Breast epithelium (tissue), 4 donors: ENCODE measurements at regions of chr11 and their contacts with region 1.

Region 1: DNA sequence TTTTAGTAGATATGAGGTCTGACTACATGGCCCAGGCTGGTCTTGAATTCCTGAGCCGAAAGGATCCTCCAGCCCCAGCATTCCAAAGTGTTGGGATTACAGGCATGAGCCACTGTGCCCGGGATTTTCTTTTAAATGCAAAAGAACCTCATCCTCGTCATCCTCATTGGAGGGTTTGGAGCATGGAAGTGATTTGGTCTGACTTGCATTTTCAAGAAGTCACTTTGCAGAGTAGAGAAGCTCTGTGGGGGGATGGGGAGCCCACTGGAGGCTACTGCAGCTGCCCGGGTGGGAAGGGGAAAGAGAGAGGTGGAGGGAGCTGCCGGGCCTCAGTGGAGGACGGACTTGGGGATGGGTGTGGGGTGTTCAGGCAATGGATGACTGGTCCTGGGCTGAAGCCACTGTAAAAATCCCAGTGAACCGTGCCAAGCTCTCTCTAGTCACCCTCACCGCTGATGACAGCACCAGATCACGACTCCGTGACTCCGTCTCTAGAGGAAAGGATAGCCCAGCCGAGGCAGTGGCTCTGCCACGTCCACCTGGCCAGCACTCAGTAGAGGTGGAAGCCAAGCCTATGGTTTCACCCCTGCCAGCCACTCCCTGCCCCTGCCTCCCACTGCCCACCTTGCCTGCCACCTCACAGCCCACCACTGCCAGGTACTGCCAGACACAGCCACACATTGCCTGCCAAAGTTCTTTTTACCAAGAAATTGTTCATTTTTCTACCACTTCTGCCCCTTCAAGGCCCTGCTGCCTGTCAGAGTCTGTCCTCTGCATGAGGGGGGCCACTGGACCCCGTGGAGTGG is 32.7 kb upstream of the SLC22A12 start:
- DNase-seq: no peak
- H3K4me3 ChIP-seq: no peak overlapping the region
- H3K27ac ChIP-seq: no peak overlapping the region
- H3K4me1 ChIP-seq: peaks cover 0 to 9% of the 10 kb centered on the region in 2 donors
- H3K27me3 ChIP-seq: no peaks in the 10 kb centered on the region
- CTCF ChIP-seq: no peak
- POLR2A ChIP-seq: no peak

Region 2: DNA sequence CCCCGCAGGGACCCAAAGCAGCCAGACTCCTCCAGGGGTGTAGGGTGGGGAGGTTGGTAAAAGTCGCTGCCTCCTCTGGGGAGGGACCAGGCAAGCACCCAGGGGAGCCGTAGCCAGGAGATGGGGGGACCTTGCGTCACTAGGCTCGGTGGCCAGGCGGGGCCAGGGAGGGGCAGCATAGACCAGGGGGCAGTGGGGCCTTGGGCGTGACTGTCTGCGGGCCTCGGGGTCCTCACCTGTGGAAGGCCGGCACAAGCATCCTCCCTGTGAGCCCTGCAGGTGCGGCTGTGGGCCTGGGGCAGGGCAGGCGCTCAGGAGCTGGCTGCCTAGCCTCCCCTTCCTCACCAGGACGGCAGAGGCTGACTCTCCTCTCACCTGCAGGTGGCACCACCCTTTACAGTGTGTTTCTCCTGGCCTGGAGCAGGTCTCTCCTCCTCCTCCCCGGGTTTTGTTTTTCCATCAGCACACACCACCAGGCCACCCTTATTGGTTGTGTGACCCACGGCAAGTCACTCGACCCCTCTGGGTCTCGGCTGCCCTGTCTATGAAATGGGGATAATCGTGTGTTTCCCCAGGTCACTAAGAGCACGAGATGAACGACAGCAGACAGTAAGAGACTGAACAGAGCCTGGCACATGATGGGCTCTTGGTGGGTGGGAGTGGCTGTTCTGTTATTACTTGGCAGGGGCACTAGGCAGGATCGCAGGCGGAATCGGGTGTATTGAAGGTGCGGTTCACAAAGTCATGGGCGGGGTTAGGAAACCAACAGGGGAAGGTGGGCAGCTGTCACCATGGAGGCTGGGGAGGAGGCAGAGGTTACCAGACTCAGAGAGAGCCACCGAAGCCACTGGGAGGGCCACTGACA is 469.9 kb before region 1 on chr11:
- intact Hi-C with region 1: no loop called
- DNase-seq: no peak
- H3K4me3 ChIP-seq: no peak overlapping the region
- H3K27ac ChIP-seq: no peak overlapping the region
- H3K4me1 ChIP-seq: no peaks in the 10 kb centered on the region
- H3K27me3 ChIP-seq: no peaks in the 10 kb centered on the region
- CTCF ChIP-seq: no peak
- POLR2A ChIP-seq: no peak

Region 3: DNA sequence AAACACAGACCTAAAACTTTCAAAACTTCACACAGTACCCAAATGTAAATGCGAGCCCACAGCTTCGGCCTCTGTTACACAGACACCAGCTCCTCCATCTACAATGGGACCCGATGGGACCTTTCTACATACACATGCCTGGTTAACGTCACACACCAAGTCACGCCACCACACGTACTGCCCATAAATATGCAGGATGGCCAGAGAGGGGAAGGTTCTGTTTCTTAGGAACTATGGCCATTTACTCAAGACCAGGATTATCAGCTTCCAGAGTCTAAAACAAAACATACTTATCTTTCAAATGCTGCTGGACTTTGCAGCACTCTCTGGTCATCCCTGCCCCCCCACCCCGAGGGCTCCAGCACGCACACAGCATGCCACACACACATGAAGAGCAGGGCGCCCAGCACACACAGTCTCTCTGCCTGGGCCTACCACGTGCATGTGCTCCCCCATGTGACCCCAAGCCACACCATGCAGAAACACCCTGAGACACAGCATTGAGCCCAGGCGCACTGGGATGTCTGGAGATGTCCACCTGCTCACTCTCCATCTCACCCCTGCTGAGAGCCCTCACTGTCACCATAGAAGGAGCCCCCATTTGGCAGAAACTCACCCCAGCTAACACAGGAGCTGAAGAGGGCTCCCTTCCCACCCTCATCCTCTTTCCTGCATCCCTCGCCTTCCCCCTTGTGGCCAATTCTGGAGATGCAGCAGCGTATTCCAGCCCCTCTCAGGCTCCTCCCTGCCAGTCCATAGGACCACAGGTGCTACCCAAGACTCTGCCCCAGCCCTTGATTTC is 94.5 kb after region 1 on chr11:
- intact Hi-C with region 1: loop called (anchors 2 kb)
- DNase-seq: peak; percentile 52 to 78
- H3K4me3 ChIP-seq: no peak overlapping the region
- H3K27ac ChIP-seq: no peak overlapping the region
- H3K4me1 ChIP-seq: no peaks in the 10 kb centered on the region
- H3K27me3 ChIP-seq: no peaks in the 10 kb centered on the region
- CTCF ChIP-seq: peak; percentile 89 to 95 (median 92)
- POLR2A ChIP-seq: no peak